ENCODE measurements at regions of chr6 and their contacts with region 1.

Region 1: DNA sequence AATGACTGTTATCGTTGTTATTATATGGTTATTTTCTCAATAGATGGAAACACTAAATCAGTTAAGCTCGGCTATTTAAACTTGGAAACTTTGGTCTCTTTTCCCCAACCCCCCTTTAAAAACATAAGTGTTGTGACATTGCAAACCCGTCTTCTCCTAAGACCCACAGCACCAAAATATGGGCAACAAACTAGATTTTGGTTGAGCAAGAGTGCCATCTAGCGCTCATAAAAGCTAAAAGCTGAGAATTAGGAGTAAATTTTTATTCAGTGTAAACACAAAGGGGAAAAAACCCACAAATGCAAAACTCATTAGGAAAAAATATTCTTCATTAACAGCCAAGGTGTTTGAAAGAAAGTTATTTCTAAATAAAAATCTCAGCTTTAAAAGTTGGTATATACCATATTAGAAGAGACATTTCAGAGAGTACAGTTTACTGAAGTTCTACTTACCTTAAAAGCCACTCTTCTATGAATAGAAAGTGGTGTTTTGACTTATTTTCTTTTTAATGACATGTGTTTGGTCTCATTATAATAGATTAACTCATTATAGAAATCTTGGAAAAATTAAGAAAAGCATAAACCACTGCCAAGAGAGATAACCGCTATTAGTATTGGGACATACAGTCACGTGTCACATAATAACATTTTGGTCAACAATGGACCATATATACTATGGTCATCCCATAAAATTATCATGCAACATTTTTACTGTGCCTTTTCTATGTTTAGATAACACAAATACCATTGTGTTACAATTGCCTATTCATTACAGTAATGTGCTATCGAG is 21.1 kb downstream of the SESN1 start:
- DNase-seq: no peak
- H3K4me3 ChIP-seq: no peak overlapping the region
- CTCF ChIP-seq: peak; percentile 27

Region 2: DNA sequence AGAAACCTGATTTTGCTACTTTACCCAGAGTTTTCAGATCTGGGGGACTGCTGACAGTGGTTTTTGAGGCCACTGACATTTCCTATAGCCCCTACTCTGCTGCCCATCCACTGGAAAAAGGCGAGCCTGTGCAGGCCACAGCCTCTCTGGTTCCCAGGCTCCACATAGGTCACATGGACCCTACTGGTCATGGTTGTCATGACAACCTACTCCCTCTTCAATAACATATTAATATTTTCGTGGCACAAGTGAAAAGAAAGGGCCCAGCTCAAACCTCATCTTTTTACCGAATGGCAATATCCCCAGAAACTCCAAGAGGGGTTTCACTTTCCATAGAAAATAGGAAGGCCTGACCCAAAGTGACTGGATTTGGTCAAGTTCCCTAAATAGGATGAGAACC is 523.8 kb before region 1 on chr6:
- CTCF ChIA-PET with region 1: interaction called, 197 read pairs
- POLR2A ChIA-PET with region 1: no interaction called
- DNase-seq: no peak
- H3K4me3 ChIP-seq: no peak overlapping the region
- CTCF ChIP-seq: no peak

Region 3: DNA sequence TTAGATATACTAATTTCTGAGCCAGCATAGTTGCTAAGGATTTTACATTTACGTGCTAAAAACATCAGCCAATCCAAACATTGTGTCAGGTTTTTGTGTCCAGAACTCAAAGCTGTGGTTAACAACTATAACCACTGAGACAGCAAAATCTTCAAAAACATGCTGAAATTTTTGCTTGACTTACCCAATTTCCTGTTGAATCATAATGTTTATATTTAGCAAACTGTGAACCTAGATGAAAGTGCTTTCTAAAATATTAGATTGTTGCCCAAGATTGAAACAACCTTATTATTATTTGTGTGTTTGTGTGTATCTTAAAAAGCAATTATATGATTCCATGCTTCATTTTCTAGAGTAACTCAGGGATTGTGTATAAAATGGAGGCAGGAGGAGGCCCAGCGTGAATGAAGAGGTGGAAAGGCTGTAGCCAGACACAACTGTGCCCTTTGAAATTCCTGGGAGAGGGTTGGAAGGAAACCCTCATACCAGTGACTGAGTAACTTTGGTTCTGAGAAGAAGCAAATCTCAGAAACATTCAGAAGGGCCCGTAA is 177.4 kb before region 1 on chr6:
- CTCF ChIA-PET with region 1: interaction called, 50 read pairs
- POLR2A ChIA-PET with region 1: no interaction called
- DNase-seq: peak; percentile 84
- H3K4me3 ChIP-seq: no peak overlapping the region
- CTCF ChIP-seq: no peak

Region 4: DNA sequence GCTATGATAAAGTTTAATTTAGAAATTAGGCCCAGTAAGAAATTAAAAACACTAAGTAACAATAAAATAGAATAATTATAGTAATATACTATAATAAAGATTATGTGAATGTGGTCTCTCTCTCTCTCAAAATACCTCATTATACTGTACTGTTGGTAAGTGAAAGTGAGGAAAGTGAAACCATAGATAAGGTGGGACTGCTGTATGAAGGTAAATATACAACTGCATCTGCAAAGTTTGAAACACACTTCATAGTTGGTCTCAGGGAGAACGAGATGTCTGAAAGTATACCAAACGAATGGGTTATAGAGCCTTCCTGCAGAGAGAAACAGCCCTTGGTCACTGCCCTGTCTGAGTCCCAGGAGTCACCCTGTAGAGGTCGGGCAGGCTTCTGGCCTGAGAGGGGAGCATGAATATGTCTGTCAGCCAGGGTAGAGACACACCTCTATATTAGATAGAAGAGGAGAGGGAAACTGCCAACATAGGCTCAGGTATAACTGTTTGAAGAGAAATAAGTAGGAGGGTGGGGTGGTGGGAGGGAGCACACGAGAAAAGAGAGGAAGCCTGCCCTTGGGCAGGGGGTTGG is 10.7 kb before region 1 on chr6:
- CTCF ChIA-PET with region 1: interaction called, 18 read pairs
- POLR2A ChIA-PET with region 1: no interaction called
- DNase-seq: no peak
- H3K4me3 ChIP-seq: no peak overlapping the region
- CTCF ChIP-seq: no peak

Region 5: GRCh38 chr6:109382576-109383437 is 309.3 kb after region 1 on chr6:
- CTCF ChIA-PET with region 1: interaction called, 10 read pairs
- POLR2A ChIA-PET with region 1: no interaction called
- DNase-seq: peak; percentile 70
- H3K4me3 ChIP-seq: peak overlapping the region; percentile 93
- CTCF ChIP-seq: peak; percentile 9